Lower leg skin (tissue), 4 donors: ENCODE measurements at regions of chr6 and their contacts with region 1.

Region 1: DNA sequence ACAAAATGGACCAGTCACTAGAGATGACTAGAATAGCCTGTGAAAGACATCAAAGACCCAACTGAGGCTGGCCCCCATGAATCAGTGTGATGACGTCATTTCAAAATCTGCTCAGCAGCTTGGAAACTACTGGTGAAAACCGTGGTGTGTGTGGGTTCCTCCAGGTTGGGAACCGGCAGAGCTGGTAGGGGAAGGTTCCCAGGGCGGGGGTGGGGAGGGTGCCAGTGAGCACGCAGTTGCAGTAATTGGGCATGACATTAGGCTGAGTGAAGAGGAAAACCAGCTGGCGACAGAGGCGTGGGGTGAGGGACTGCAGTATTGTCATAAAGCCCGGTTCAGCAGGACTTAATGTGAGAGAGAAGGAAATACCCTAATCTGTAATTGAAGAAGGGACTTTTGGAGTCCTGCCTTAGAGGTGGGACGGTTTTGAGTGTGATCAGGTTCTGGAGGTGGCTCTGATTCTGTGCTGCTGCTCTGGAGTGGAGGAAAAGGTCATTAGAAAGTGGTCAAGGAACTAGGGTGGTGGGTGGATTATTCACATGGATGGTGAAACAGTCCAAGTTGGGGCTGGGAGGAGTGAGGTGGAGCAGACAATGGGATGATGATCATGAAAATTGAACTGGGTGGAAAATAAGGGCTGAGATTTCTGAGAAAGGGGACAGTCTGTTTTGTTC is 52.0 kb upstream of the MTHFD1L start:
- DNase-seq: no peak
- H3K4me3 ChIP-seq: no peak overlapping the region
- CTCF ChIP-seq: no peak
- POLR2A ChIP-seq: no peak

Region 2: DNA sequence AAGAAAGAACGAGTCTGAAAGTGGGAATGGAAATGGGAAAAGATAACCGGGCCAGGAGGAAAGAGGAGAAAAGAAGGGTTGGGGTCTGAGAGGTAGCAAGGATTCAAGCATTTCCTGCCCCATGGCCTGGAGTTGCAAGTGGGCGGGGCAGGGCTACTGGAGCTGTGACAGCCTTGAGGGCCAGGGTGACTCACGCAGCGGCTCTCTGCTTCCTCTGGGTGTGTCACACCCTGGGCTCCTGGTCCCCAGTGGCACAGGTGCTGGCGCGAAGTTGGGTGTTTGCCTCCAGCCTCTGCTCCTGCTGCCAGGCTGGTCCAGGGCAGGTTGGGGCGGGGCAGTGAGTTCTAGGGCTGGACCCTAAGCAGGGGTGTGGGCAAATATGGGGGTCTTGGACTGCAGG is 741.3 kb before region 1 on chr6:
- intact Hi-C with region 1: loop called (anchors 10 kb)
- DNase-seq: peak; percentile 53 to 91
- H3K4me3 ChIP-seq: no peak overlapping the region
- CTCF ChIP-seq: no peak
- POLR2A ChIP-seq: no peak

Region 3: GRCh38 chr6:150417899-150418826 is 395.3 kb before region 1 on chr6:
- intact Hi-C with region 1: loop called (anchors 5 kb)
- DNase-seq: no peak
- H3K4me3 ChIP-seq: no peak overlapping the region
- CTCF ChIP-seq: peak in 1 of 3 donors; percentile 46
- POLR2A ChIP-seq: no peak